Spleen (tissue), 13 donors: ENCODE measurements at regions of chr3 and their contacts with region 1.

Region 1: DNA sequence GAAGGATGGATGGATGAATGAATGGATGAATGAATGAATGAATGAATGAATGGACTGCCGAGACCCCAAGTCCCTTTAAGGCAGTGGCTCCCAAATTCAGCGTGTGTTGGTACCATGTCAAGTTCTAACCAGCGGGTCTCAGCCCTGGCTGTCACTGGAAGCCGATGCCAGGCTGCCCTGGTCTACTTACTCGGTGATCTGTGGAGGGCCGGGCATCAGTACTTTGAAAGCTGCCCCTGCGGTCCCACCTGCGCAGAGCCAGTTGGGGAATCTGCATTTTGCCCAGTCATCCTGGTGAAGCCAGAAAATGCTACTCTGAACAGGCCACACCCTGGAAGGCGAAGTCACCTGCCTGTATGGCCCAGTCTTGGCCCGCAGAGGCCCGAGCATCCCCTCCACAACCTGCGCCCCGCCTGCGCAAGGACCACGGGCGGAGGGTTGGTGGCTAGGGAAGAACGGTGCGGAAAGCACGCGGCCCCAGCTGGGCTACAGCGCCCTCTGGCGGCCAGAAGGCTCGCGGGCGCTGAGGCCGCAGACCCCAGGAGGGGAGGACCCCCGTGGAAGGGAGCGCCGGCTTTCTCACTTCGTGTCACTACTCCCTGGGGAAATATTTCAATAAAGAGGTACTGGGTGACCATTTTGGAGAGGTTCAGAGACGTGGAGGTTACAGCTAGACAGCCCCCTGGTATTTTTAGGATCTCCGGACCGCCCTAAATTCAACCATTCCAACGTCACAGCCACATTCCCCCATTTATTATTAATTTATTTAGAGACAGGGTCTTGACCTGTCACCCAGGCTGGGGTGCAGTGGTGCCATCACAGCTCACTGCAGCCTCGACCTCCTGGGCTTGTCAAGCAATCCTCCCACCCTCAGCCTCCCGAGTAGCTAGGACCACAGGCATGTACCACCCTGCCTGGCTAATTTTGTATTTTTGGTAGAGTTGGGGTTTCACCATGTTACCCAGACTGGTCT is 34.9 kb downstream of the PRKCD start:
- DNase-seq: peak; percentile 91
- H3K4me3 ChIP-seq: peak overlapping the region in 1 of 8 donors; percentile 27
- H3K27ac ChIP-seq: peak overlapping the region in 3 of 8 donors; percentile 15 to 54 (median 31)
- H3K4me1 ChIP-seq: peaks cover 15 to 64% (median 52%) of the 10 kb centered on the region in 6 donors
- H3K27me3 ChIP-seq: peaks cover 0 to 4% (median 0%) of the 10 kb centered on the region in 7 donors
- CTCF ChIP-seq: peak; percentile 84 to 100 (median 96)
- POLR2A ChIP-seq: no peak

Region 2: GRCh38 chr3:52483577-52484381 is 712.1 kb before region 1 on chr3:
- intact Hi-C with region 1: no loop called
- DNase-seq: no peak
- H3K4me3 ChIP-seq: no peak overlapping the region
- H3K27ac ChIP-seq: peak overlapping the region in 1 of 8 donors; percentile 26
- H3K4me1 ChIP-seq: peaks cover 0 to 48% (median 12%) of the 10 kb centered on the region in 6 donors
- H3K27me3 ChIP-seq: no peaks in the 10 kb centered on the region
- CTCF ChIP-seq: no peak
- POLR2A ChIP-seq: no peak

Region 3: DNA sequence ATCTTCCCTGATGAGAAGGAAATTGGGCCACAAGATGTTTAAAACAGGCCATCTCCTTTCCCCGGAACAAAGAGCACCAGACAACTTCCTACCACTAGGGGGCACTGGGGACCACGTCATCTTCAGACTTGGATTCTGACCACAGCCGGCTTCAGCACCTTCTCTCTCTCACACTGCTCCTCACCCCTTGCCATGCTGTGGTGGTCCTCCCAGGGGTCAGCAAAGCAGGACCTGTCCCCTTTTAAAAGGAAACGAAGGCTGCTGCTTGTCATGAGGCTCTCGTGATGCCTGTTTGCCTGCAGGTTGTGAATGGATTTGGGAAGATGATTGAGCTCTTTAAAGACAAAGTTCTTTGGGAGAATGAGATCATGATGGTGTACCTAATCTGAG is 81.9 kb before region 1 on chr3:
- intact Hi-C with region 1: loop called (anchors 5 kb)
- DNase-seq: peak; percentile 91
- H3K4me3 ChIP-seq: peak overlapping the region in 1 of 8 donors; percentile 42
- H3K27ac ChIP-seq: peak overlapping the region in 7 of 8 donors; percentile 54 to 88 (median 73)
- H3K4me1 ChIP-seq: peaks cover 0 to 44% (median 12%) of the 10 kb centered on the region in 6 donors
- H3K27me3 ChIP-seq: no peaks in the 10 kb centered on the region
- CTCF ChIP-seq: peak; percentile 75 to 95 (median 91)
- POLR2A ChIP-seq: no peak